Gastrocnemius medialis (tissue), 4 donors: ENCODE measurements at regions of chr10 and their contacts with region 1.

Region 1: DNA sequence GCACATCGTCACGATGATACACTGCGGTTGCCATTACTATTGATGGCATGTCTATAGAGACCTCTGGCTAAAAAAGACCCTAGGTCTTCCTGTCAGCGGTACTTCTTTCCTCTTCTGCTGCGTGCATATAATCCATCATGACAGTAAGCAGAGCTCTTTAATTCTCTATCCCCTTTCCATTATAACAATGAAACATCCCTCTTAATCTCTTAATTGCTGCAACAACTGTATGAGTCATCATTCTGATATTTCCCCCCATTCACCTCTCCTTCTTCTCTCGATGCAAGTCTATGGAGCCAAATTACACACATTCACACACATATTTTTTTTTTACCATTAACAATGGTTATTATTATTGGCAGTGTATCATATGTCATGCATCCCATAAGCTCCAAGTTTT is 45.2 kb upstream of the AKR1E2 start:
- DNase-seq: no peak
- ATAC-seq: peak in 1 of 2 donors; percentile 26
- H3K4me3 ChIP-seq: no peak overlapping the region
- H3K27ac ChIP-seq: no peak overlapping the region
- H3K4me1 ChIP-seq: peaks cover 0 to 9% of the 10 kb centered on the region in 2 donors
- H3K27me3 ChIP-seq: no peaks in the 10 kb centered on the region
- CTCF ChIP-seq: no peak
- POLR2A ChIP-seq: no peak

Region 2: GRCh38 chr10:3226960-3227744 is 1553.6 kb before region 1 on chr10:
- in situ Hi-C with region 1: loop called in 2 of 4 experiments (anchors 10 kb)
- intact Hi-C with region 1: no loop called
- DNase-seq: no peak
- ATAC-seq: no peak
- H3K4me3 ChIP-seq: no peak overlapping the region
- H3K27ac ChIP-seq: no peak overlapping the region
- H3K4me1 ChIP-seq: no peaks in the 10 kb centered on the region
- H3K27me3 ChIP-seq: no peaks in the 10 kb centered on the region
- CTCF ChIP-seq: no peak
- POLR2A ChIP-seq: no peak

Region 3: DNA sequence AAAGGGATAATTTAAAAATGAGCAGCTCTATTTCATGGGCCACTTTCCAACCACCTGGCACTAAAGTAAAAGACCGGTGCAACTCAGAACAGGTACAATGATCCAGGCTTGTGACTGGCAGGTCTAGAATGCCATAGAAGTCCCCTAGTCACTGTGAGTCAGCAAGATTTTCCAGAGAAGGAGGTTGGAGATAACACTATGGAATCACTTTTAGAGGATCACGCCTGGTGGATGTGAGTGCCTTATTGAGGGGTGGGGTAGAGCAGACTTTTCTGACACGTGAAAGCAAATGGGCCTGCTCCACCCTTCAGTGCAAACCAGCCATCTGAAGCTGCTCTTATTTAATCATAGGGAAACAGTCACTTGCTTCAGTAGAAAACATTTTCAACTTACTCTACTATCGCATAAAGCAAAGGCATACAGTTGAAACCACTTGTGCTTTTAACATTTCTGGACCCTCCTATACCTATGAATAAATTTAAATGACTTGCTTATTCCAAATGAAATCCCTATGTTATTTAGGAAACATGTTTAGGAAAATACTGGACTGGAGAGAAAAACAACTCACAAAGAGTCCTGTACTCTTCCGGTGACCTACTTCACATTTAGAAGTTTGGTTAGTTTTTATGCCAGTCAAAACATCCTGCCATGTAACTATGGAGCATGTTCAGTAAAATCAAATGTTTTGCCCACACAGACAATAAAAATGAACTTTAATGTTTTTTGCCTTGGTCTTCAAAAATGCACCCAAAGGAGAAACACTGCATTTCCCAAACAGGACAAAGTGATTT is 161.0 kb after region 1 on chr10:
- in situ Hi-C with region 1: no loop called
- intact Hi-C with region 1: no loop called
- DNase-seq: no peak
- ATAC-seq: peak; percentile 26 to 47
- H3K4me3 ChIP-seq: no peak overlapping the region
- H3K27ac ChIP-seq: peak overlapping the region; percentile 67 to 70 (median 68)
- H3K4me1 ChIP-seq: peaks cover 30 to 37% of the 10 kb centered on the region in 2 donors
- H3K27me3 ChIP-seq: no peaks in the 10 kb centered on the region
- CTCF ChIP-seq: no peak
- POLR2A ChIP-seq: no peak